Activated CD4-positive, alpha-beta T cell treated with anti-CD3 and anti-CD28 coated beads, Interleukin-2, amount 10 ng/mL, durations not matched to agents 24 days and 14 days (primary cell): ENCODE measurements at regions of chr13 and their contacts with region 1.

Region 1: DNA sequence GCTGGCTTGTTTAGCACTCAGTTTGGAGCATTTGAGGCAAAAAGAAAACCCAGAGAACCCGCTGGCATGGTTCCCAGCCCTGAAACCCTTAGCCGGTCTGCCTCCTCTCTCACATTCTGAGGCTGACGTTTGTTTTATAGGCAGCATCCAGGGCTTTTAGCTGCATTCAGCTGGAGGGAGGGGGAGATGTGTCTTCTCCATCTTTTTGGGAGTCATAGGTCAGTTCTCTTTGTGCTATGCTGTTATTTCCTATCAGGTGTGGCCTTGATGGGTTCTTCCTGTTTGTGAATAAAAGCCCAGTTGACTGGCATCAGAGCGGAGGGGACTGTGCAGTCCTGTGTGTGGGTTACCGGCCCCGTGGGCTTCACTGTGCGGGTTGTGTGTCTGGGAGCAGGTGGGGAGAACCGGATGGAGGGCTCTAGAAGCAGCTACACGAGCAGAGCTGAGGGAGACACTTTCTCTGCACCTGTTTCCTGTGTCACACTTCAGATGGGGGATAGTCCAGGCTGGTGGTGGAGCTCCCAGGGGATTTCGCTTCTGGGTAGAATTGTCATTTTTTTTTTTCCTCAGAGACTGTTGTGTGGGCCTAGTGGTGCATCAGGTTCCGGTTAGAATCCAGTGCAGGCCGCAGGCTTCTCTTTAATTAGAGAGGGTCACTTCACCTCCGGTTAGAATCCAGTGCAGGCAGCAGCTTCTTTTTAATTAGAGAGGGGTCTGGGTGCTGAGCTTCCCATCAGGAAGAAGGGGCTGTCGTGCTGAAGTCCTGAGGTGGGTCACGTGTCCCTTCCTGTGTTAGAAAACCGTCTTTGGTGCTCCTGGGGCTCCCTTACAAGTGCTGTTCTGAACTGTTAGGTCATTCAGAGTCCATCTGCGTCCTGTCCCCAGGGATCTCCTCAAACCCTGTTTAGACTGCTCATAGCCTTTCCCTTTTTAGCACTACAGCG is 69.6 kb downstream of the ARHGEF7 start:
- DNase-seq: peak; percentile 81
- H3K4me3 Mint-ChIP-seq: peak overlapping the region; percentile 82
- H3K27ac Mint-ChIP-seq: peak overlapping the region; percentile 94
- H3K4me1 Mint-ChIP-seq: peaks cover 87% of the 10 kb centered on the region
- H3K27me3 Mint-ChIP-seq: no peaks in the 10 kb centered on the region

Region 2: DNA sequence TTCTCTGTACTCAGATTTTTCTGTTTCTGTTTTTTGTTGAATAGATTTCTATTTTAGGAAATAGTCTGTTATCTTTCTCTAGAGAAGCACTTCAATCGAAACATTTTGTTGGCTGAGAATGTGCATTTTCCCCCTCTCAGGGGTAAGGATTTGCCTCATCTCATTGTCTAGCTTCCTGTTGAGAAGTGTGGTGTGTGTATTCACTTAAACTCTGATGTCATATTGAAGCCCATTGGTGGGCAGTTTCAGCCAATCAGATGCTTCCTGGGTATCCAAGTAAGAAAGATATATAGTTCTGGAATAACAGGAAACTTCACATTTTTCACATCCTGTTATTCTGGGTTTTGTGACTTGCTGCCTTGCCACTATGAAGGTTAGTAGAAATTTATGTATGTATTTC is 18.0 kb after region 1 on chr13:
- intact Hi-C with region 1: loop called (anchors 1 kb)
- DNase-seq: peak; percentile 72
- H3K4me3 Mint-ChIP-seq: peak overlapping the region; percentile 32
- H3K27ac Mint-ChIP-seq: peak overlapping the region; percentile 39
- H3K4me1 Mint-ChIP-seq: peaks cover 47% of the 10 kb centered on the region
- H3K27me3 Mint-ChIP-seq: no peaks in the 10 kb centered on the region

Region 3: GRCh38 chr13:111219280-111219679 is 34.5 kb after region 1 on chr13:
- intact Hi-C with region 1: loop called (anchors 5 kb)
- DNase-seq: no peak
- H3K4me3 Mint-ChIP-seq: no peak overlapping the region
- H3K27ac Mint-ChIP-seq: no peak overlapping the region
- H3K4me1 Mint-ChIP-seq: peaks cover 14% of the 10 kb centered on the region
- H3K27me3 Mint-ChIP-seq: no peaks in the 10 kb centered on the region